IMR-90 (cell line): ENCODE measurements at regions of chr9 and their contacts with region 1.

Region 1: DNA sequence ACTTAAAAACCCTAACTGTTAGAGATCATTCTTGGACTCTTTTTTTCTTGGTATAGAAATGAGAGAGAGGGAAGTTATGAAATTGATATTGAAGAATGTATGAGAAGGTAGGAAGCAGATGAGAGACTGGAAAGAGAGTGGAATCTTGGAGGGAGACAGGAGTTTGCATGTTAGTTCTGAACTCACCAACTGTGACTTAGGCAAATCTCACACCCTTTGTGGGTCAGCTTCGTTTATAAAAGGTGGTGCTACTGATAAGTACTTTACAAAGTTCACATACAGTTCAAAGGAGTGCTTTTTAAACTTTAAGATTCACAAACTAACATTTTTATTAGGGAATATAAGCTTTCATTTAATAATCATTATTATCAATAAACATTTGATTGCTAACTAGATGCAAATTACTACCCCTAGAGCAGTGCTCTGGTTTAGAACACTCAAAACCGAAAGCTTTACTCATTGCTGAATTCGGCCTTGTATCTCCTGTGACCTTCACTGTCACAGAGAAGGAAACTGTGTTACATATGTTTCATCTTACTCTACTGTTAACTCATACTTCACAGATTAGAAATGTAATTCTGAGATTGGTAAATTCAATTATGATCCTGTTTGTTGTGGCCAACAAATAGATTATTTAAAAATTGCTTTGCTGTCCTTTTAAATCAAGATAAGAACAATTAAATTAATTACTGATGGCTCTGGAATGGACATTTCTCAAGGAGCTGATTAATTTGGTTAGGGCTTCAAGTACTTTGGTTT is 143.2 kb downstream of the RMI1 start:
- DNase-seq: no peak
- ATAC-seq: no peak
- H3K4me3 ChIP-seq: no peak overlapping the region
- H3K27ac ChIP-seq: no peak overlapping the region
- H3K4me1 ChIP-seq: no peaks in the 10 kb centered on the region; the same call in 1 of the 2 replicates
- H3K27me3 ChIP-seq: peaks cover 5% of the 10 kb centered on the region; the same call in 1 of the 2 replicates
- CTCF ChIP-seq: no peak
- POLR2A ChIP-seq: no peak
- RAD21 ChIP-seq: no peak

Region 2: DNA sequence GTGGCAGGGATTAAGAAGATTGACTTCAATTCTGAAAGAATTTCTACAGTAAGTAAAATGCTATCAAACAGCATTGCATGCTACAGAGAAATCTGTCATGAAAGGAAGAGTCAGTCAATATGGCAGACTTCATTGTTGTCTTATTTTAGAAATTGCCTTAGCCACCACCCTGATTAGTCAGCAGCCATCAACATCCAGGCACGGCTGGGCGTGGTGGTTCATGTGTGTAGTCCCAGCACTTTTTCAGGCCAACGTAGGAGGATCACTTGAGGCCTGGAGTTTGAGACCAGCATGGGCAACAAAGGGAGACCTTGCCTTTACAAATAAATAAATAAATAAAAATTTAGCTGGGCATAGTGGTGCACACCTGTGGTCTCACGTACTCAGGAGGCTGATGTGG is 96.6 kb before region 1 on chr9:
- CTCF ChIA-PET with region 1: no interaction called
- POLR2A ChIA-PET with region 1: no interaction called
- dilution Hi-C with region 1: no loop called
- in situ Hi-C with region 1: no loop called
- intact Hi-C with region 1: no loop called
- DNase-seq: no peak
- ATAC-seq: no peak
- H3K4me3 ChIP-seq: no peak overlapping the region
- H3K27ac ChIP-seq: no peak overlapping the region
- H3K4me1 ChIP-seq: no peaks in the 10 kb centered on the region
- H3K27me3 ChIP-seq: no peaks in the 10 kb centered on the region
- CTCF ChIP-seq: no peak
- POLR2A ChIP-seq: no peak
- RAD21 ChIP-seq: no peak

Region 3: DNA sequence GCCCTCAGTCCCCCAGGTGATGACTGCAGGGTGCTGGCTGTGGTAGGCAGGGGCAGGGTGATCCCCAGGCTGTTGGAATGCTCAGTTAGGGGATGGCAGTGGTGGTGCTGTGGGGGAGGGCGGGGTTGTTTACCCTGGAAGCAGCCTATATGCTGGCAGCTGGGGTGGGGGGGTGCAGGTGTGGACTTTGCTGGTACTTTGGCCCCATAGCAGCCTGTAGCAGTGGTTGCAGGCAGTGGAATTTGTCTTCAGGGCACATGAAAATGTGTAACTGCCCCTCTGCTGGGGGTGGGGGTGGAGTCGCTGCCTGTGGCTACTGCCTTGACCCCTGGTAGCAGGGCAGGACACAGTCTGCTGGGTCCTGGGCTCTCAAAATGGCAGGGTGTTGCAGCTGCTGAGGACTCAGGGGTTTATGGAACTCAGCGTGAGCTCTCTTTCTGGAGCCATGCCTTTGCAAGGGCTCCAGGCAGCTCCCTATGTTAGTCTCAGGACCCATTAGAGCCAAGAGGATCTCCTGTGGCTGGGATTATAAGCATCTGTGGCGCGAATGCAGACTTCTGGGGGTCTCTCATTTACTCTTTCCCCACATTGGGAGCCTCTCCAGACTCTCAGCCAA is 78.2 kb before region 1 on chr9:
- CTCF ChIA-PET with region 1: no interaction called
- POLR2A ChIA-PET with region 1: no interaction called
- dilution Hi-C with region 1: no loop called
- in situ Hi-C with region 1: no loop called
- intact Hi-C with region 1: no loop called
- DNase-seq: no peak
- ATAC-seq: no peak
- H3K4me3 ChIP-seq: no peak overlapping the region
- H3K27ac ChIP-seq: no peak overlapping the region
- H3K4me1 ChIP-seq: peaks cover 2% of the 10 kb centered on the region
- H3K27me3 ChIP-seq: no peaks in the 10 kb centered on the region; the same call in none of the 2 replicates
- CTCF ChIP-seq: no peak
- POLR2A ChIP-seq: no peak
- RAD21 ChIP-seq: no peak

Region 4: GRCh38 chr9:84061594-84062193 is 62.1 kb before region 1 on chr9:
- CTCF ChIA-PET with region 1: no interaction called
- POLR2A ChIA-PET with region 1: interaction called, 12 read pairs
- dilution Hi-C with region 1: no loop called
- in situ Hi-C with region 1: no loop called
- intact Hi-C with region 1: no loop called
- DNase-seq: no peak
- ATAC-seq: no peak
- H3K4me3 ChIP-seq: no peak overlapping the region
- H3K27ac ChIP-seq: no peak overlapping the region
- H3K4me1 ChIP-seq: no peaks in the 10 kb centered on the region
- H3K27me3 ChIP-seq: no peaks in the 10 kb centered on the region; the same call in none of the 2 replicates
- CTCF ChIP-seq: no peak
- POLR2A ChIP-seq: no peak
- RAD21 ChIP-seq: no peak

Region 5: GRCh38 chr9:84170521-84171141 is 46.8 kb after region 1 on chr9:
- CTCF ChIA-PET with region 1: no interaction called
- POLR2A ChIA-PET with region 1: no interaction called
- dilution Hi-C with region 1: no loop called
- in situ Hi-C with region 1: no loop called
- intact Hi-C with region 1: loop called (anchors 5 kb)
- DNase-seq: peak; percentile 98
- ATAC-seq: peak; percentile 96
- H3K4me3 ChIP-seq: no peak overlapping the region
- H3K27ac ChIP-seq: peak overlapping the region; percentile 81
- H3K4me1 ChIP-seq: peaks cover 17% of the 10 kb centered on the region
- H3K27me3 ChIP-seq: no peaks in the 10 kb centered on the region
- CTCF ChIP-seq: 0 out of 2 replicates have a peak, but pooled peaks have one; percentile 13
- POLR2A ChIP-seq: no peak
- RAD21 ChIP-seq: peak; percentile 23; the same call in 1 of the 2 replicates